Right cardiac atrium (tissue), 5 donors: ENCODE measurements at regions of chr1 and their contacts with region 1.

Region 1: GRCh38 chr1:205913451-205914155 is 29.7 kb downstream of the SLC26A9 start:
- DNase-seq: peak; percentile 80 to 90 (median 88)
- ATAC-seq: peak; percentile 75 to 79
- H3K4me3 ChIP-seq: no peak overlapping the region
- H3K27ac ChIP-seq: peak overlapping the region; percentile 80
- H3K4me1 ChIP-seq: peaks cover 9% of the 10 kb centered on the region
- H3K27me3 ChIP-seq: no peaks in the 10 kb centered on the region

Region 2: DNA sequence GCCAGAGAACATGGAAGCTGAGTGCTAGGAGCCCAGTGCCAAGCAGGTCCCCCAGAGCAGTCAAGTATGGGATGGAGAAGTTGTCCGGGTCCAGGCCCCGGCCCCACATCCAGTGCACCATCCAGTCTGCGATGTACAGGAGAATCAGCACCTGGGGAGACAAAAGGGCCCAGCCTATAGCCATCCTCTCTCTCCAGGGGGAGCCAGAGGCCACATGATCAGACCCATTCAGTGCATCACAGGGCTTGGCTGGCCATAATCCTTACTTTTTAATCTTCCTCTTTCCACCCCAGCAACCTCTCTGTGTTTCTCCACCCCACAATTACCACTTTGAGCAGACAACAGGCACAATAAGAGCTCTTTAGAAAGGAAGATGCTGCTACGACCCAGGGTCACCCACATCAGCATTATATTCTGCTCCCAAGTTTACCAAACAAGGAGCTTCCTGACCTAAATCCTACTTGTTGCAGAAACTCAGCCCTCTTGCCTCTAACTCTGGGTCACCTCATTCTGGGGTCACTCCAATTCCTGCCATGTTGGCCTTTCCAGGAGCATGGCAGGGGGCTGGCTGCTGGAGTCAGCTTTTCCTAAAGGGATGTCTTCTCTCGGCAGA is 121.9 kb before region 1 on chr1:
- intact Hi-C with region 1: loop called (anchors 2 to 10 kb)
- DNase-seq: peak; percentile 52 to 85 (median 76)
- ATAC-seq: peak; percentile 69 to 73
- H3K4me3 ChIP-seq: no peak overlapping the region
- H3K27ac ChIP-seq: no peak overlapping the region
- H3K4me1 ChIP-seq: no peaks in the 10 kb centered on the region
- H3K27me3 ChIP-seq: no peaks in the 10 kb centered on the region

Region 3: DNA sequence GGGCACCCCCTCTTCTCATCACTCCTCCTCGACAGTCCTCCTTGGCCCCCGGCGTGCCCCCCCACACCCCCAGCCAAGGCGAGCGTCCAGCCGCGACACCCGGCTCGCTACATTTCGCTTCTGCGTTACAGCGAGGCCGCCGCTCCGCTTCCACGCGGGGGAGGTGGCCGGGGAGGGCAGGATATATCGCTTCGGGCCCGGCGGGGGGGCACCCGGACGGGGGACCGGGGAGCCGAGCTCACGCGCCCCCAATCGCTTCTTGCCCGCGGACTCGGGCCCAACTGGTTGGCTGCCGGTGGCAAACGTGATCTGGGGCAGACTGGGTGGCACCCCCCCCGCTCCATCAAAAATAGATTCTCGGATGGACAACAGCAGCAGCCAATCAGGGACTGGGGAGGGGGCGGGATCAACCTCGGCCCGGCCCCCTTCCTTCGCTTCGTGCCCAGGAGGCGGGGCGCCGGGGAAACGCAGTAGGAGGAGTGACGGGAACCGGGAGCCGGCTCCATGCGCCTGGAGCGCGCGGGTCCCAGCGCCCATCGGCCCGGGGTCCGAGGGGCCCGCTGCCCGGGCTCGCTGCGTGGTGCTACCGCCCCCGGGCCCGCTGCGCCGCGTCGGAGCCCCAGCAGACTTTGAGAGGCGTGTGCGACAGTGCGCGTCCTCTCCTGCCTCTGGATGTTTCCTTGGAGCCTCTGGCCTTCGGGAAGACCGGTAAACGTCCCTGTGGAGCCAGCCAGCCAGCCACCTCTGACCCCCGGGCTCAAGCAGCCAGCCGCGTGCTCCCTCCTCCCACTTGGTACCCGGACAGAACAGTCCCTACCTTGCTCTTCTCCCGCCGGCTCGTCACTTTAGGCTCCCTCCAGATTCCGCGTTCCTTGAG is 100.5 kb before region 1 on chr1 and contains the start of gene SLC41A1:
- intact Hi-C with region 1: loop called in 3 of 4 experiments (anchors 5 to 10 kb)
- DNase-seq: peak; percentile 92 to 97 (median 96)
- ATAC-seq: peak; percentile 95
- H3K4me3 ChIP-seq: peak within 1 kb of the TSS; percentile 79
- H3K27ac ChIP-seq: peak within 1 kb of the TSS; percentile 63
- H3K4me1 ChIP-seq: peaks cover 8% of the 10 kb centered on the region
- H3K27me3 ChIP-seq: no peaks in the 10 kb centered on the region
- total RNA-seq, gene SLC41A1: 235 to 420 (median 330) TPM